Activated B cell treated with CpG ODN at 0.5 μM for 24 hours (primary cell): ENCODE measurements at regions of chr4 and their contacts with region 1.

Region 1: DNA sequence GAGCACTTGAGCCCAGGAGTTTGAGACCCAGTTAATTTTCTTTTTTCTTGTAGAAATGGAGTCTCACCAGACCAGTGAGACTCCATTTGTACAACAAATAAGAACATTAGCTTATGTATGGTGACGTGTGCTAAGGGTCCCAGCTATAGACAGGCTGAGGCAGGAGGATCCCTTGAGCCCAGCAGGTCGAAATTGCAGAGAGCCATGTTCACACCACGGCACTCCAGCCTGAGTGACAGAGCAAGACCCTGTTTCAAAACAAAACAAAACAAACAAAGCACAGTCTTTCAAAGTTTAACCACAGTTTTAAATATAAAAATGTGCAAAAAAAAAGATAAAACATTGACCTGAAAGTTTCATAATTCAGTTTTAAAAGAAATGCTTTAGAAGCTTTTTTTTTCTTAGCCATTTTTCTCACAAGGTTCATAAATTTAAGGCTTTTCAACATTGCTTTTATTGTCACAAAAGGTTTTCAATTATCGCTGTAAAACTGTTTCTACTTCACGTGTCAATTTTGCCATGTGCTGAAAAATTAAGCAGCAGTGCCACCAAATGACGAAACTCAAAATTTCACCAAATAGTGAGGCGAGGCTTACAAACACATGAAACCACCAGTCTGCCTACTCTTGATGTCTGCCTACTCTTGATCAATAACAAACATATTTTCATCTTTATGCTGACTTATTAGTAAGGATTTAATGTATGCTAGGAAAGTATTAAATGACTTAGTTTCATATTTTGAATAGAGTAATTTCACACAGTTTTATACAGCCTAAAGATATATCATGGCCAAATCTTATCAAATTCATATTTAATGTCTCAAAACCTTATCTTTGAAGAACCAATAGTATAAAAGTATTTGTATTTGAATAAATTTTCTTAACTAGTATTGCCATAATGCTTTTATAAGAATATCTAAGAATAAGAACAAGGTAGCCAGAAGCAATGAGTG is 126.3 kb downstream of the NEK1 start:
- DNase-seq: no peak
- ATAC-seq: no peak
- H3K4me3 Mint-ChIP-seq: no peak overlapping the region
- H3K27ac Mint-ChIP-seq: no peak overlapping the region
- H3K4me1 Mint-ChIP-seq: no peaks in the 10 kb centered on the region
- H3K27me3 Mint-ChIP-seq: no peaks in the 10 kb centered on the region
- CTCF ChIP-seq: no peak

Region 2: GRCh38 chr4:168183717-168184608 is 1302.1 kb before region 1 on chr4:
- CTCF ChIA-PET with region 1: no interaction called
- POLR2A ChIA-PET with region 1: no interaction called
- intact Hi-C with region 1: loop called (anchors 2 kb)
- DNase-seq: no peak
- ATAC-seq: no peak
- H3K4me3 Mint-ChIP-seq: no peak overlapping the region
- H3K27ac Mint-ChIP-seq: no peak overlapping the region
- H3K4me1 Mint-ChIP-seq: peaks cover 6% of the 10 kb centered on the region
- H3K27me3 Mint-ChIP-seq: no peaks in the 10 kb centered on the region
- CTCF ChIP-seq: no peak

Region 3: GRCh38 chr4:168923526-168924194 is 562.4 kb before region 1 on chr4:
- CTCF ChIA-PET with region 1: interaction called, 42 read pairs
- POLR2A ChIA-PET with region 1: no interaction called
- intact Hi-C with region 1: loop called (anchors 1 kb)
- DNase-seq: no peak
- ATAC-seq: peak; percentile 54
- H3K4me3 Mint-ChIP-seq: no peak overlapping the region
- H3K27ac Mint-ChIP-seq: no peak overlapping the region
- H3K4me1 Mint-ChIP-seq: no peaks in the 10 kb centered on the region
- H3K27me3 Mint-ChIP-seq: no peaks in the 10 kb centered on the region
- CTCF ChIP-seq: peak; percentile 61

Region 4: DNA sequence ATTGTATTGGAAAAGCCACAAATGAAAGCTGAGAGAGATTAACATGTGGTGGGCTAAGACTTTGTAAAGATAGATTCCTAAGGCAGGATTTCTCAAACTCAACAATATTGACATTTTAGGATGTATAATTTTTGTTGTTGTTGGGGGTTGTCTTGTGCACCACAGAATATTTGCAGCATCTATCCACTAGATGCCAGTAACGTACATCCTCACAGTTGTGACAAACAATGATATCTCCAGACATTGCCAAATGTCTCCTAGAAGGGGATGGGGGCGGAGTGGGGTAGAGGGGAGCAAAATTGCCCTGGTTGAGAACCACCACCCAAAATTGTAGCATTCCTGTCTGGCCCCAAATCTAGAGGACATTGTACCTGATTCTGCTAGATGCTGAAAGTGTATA is 461.3 kb before region 1 on chr4:
- CTCF ChIA-PET with region 1: interaction called, 10 read pairs
- POLR2A ChIA-PET with region 1: no interaction called
- intact Hi-C with region 1: loop called (anchors 1 kb)
- DNase-seq: no peak
- ATAC-seq: peak; percentile 50
- H3K4me3 Mint-ChIP-seq: no peak overlapping the region
- H3K27ac Mint-ChIP-seq: no peak overlapping the region
- H3K4me1 Mint-ChIP-seq: no peaks in the 10 kb centered on the region
- H3K27me3 Mint-ChIP-seq: peaks cover 3% of the 10 kb centered on the region
- CTCF ChIP-seq: no peak

Region 5: DNA sequence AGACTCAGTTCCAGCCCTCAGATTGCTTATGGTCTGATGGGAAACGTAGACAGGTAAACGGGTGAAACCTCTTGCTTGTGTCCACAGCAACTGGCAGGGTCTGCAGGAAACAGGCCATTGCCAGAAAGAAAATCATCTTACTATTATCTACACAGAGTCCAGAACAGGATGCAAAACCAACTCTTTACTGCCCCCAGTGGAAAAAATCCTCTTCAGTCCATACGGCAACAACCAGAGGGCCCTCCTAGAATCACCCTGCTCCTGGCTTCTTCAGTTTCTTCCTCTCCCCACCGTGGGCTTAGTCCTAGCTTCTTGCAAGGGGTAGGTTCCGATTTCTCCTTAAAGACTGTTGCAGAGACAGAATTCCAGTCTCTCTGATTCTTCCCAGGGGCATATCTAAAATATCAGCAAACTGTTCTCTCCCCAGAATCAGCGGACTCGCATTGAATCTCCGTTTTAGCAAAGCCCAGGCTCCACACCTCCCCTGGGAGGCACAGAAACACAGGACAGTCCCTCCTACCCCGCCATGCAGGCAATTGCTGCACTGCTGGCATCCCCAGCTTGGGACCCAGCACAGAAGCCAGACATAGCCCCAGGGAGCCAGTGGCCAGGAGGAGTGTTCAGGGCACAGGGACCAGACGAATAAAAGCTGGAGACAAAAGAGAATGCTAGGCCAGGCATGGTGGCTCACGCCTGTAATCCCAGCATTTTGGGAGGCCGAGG is 174.3 kb before region 1 on chr4:
- CTCF ChIA-PET with region 1: no interaction called
- POLR2A ChIA-PET with region 1: no interaction called
- intact Hi-C with region 1: loop called (anchors 2 kb)
- DNase-seq: no peak
- ATAC-seq: peak; percentile 74
- H3K4me3 Mint-ChIP-seq: no peak overlapping the region
- H3K27ac Mint-ChIP-seq: no peak overlapping the region
- H3K4me1 Mint-ChIP-seq: no peaks in the 10 kb centered on the region
- H3K27me3 Mint-ChIP-seq: peaks cover 3% of the 10 kb centered on the region
- CTCF ChIP-seq: no peak

Region 6: GRCh38 chr4:169757575-169758184 is 271.6 kb after region 1 on chr4 and contains the start of gene HPF1:
- CTCF ChIA-PET with region 1: no interaction called
- POLR2A ChIA-PET with region 1: no interaction called
- intact Hi-C with region 1: no loop called
- DNase-seq: peak; percentile 85
- ATAC-seq: peak; percentile 95
- H3K4me3 Mint-ChIP-seq: peak within 1 kb of the TSS; percentile 92
- H3K27ac Mint-ChIP-seq: peak within 1 kb of the TSS; percentile 68
- H3K4me1 Mint-ChIP-seq: peaks cover 23% of the 10 kb centered on the region
- H3K27me3 Mint-ChIP-seq: no peaks in the 10 kb centered on the region
- CTCF ChIP-seq: no peak
- total RNA-seq, gene HPF1: 17.9 and 19.5 TPM in 2 replicates